AG04449 (cell line): ENCODE measurements at regions of chr14 and their contacts with region 1.

Region 1: DNA sequence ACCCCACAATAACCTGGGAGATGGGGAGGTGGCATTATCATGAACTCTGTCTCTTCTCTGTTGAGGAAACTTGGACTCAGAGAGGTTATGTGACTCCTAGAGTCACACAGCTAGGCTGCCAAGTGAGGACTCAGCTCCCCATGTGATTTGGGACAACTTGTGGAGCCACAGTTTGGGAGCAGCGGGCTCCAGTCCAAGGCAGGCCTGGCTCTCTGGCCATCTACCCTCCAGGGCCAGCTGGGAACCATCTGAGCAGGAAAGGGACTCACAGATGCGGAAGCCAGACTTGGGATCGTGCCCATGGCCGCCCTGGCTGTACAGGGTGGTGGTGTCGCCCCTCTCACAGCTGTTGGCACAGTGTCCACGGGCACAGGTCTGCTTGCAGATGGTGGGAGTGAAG is 59.1 kb downstream of the ISCA2 start:
- DNase-seq: no peak
- H3K4me3 ChIP-seq: no peak overlapping the region
- CTCF ChIP-seq: no peak

Region 2: DNA sequence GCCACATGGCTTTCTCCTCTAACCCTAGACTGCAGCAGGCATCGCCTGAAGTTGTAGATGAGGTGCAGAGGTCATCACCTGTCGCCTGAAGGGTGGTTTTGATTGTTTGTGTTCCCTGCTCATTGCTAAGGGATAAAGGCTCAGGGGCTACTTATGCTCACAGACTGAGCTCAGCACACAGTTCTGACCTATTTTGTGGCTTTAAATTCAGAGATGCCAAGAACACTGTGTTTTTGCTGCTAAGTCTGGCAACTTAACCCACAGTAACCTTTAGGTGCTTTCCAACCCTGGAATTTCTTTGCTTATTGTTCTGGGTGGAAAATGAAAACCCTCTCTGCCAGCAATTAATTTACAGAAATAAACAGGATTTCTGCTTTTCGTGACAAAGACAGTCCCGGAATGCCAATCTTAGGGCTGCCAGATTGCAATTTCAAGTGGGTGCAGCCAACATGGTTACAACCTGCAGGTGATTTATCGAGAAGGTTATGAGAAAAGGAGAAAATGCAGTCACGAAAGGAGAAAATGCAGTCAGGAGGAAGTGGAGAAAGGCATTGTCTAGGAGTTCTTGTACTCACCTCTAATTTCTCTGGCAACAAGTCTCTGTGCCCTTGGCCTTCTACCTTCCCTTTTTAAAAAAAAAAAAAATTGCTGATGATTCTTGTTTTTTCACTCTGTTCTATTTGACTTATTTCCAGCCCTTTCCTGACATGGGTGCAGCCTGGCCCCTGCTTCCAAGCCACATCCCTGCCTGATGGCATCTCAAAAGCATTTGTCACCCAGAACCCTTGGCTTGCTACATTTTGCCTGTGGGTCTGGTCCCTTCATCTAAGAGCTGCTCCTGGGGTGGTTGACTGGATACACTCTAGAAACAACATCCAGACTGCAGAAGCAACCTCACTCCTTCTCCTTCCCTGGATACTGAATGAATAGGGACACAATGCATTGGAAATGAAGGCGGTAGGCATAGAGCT is 82.8 kb before region 1 on chr14:
- CTCF ChIA-PET with region 1: no interaction called
- POLR2A ChIA-PET with region 1: no interaction called
- DNase-seq: no peak
- H3K4me3 ChIP-seq: no peak overlapping the region
- CTCF ChIP-seq: no peak

Region 3: GRCh38 chr14:74562515-74563232 is 10.1 kb after region 1 on chr14:
- CTCF ChIA-PET with region 1: interaction called, 15 read pairs
- POLR2A ChIA-PET with region 1: no interaction called
- DNase-seq: no peak
- H3K4me3 ChIP-seq: no peak overlapping the region
- CTCF ChIP-seq: peak; percentile 13

Region 4: GRCh38 chr14:74579447-74580274 is 27.0 kb after region 1 on chr14:
- CTCF ChIA-PET with region 1: no interaction called
- POLR2A ChIA-PET with region 1: no interaction called
- DNase-seq: peak; percentile 56
- H3K4me3 ChIP-seq: no peak overlapping the region
- CTCF ChIP-seq: no peak